ENCODE measurements at regions of chr1 and their contacts with region 1.

Region 1: GRCh38 chr1:160951443-160952128 is 3.0 kb downstream of the ITLN2 start:
- DNase-seq: peak; percentile 87
- ATAC-seq: peak; percentile 88
- H3K4me3 Mint-ChIP-seq: no peak overlapping the region
- H3K27ac Mint-ChIP-seq: no peak overlapping the region
- H3K4me1 Mint-ChIP-seq: peaks cover 22% of the 10 kb centered on the region
- H3K27me3 Mint-ChIP-seq: no peaks in the 10 kb centered on the region

Region 2: DNA sequence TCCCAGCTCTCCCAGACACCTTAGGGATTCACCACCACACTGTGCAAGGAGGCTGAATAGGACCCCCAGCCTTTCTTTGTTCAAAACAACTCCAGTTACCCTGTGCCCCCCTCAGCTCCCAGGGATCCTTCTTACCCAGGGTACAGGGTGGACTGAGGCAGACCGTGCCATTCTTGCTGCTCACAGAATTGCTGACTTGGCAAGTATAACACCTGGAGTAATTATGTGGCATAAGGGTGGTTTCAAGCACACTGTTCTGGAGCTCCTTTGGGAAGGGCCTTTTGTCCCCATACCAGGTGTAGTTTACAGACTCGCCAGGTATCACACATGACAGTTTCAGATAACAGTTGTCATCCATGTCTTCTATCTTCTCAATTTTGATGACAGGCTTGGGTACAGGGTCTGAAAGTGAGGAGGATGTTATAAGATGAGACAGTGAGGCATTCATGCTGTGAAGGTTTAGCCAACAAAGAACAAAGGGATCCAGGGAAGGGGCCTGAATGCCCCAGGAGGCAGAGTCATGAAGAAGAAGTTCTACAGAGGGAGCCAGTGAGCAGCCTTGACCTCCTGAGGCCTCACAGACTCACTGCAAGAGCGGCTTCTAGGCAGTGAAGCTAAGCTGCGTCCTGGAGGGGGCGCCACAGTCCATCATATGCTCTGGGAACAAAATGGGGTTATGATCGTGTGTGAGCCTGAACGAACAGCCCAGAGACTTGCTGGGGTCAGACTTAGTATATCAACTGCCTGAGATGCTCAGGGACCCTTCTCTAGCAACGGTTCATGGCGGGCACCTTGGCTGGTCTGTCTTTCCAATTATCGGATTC is 270.3 kb before region 1 on chr1:
- CTCF ChIA-PET with region 1: interaction called, 64 read pairs
- POLR2A ChIA-PET with region 1: no interaction called
- DNase-seq: peak; percentile 93
- ATAC-seq: peak; percentile 78
- H3K4me3 Mint-ChIP-seq: no peak overlapping the region
- H3K27ac Mint-ChIP-seq: peak overlapping the region; percentile 88
- H3K4me1 Mint-ChIP-seq: peaks cover 85% of the 10 kb centered on the region
- H3K27me3 Mint-ChIP-seq: no peaks in the 10 kb centered on the region

Region 3: GRCh38 chr1:160777486-160778089 is 174.0 kb before region 1 on chr1:
- CTCF ChIA-PET with region 1: interaction called, 226 read pairs
- POLR2A ChIA-PET with region 1: no interaction called
- DNase-seq: peak; percentile 66
- ATAC-seq: peak; percentile 76
- H3K4me3 Mint-ChIP-seq: no peak overlapping the region
- H3K27ac Mint-ChIP-seq: peak overlapping the region; percentile 26
- H3K4me1 Mint-ChIP-seq: peaks cover 40% of the 10 kb centered on the region
- H3K27me3 Mint-ChIP-seq: no peaks in the 10 kb centered on the region

Region 4: DNA sequence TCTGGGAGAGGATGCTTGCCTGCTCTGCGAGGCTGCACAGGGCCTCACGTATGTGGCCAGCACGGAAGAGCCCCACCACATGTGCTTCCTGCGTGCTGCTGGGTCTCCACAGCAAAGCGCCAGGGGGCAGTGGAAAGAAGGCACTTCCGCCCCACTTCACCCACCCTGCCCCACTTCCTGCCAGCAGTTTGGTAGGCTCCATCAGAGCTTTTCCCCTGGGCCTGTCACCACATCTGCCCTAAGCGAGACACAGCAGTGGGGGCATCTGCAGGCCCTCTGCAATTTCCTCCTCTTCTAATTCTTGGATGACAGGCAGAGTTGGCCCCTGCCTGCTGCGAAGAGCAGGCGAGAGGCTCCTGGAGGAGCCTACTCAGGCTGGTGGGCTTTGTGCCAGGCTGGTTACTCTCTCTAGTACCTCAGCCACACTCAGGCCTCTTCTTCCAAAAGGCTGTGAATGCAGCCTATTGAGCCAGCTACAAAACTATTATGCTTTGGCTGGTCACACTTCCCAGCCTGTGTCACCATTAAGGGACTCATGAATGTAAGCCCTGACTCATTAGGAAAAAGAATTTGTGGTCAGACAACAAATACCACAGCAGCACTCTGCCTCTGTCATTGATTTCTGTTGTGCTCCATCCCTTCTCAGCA is 113.9 kb before region 1 on chr1:
- CTCF ChIA-PET with region 1: interaction called, 323 read pairs
- POLR2A ChIA-PET with region 1: interaction called, 8 read pairs
- DNase-seq: peak; percentile 96
- ATAC-seq: peak; percentile 93
- H3K4me3 Mint-ChIP-seq: peak overlapping the region; percentile 73
- H3K27ac Mint-ChIP-seq: peak overlapping the region; percentile 97
- H3K4me1 Mint-ChIP-seq: peaks cover 77% of the 10 kb centered on the region
- H3K27me3 Mint-ChIP-seq: no peaks in the 10 kb centered on the region

Region 5: GRCh38 chr1:160963521-160963920 is 11.9 kb after region 1 on chr1:
- CTCF ChIA-PET with region 1: interaction called, 14 read pairs
- POLR2A ChIA-PET with region 1: no interaction called
- DNase-seq: no peak
- ATAC-seq: no peak
- H3K4me3 Mint-ChIP-seq: no peak overlapping the region
- H3K27ac Mint-ChIP-seq: no peak overlapping the region
- H3K4me1 Mint-ChIP-seq: no peaks in the 10 kb centered on the region
- H3K27me3 Mint-ChIP-seq: peaks cover 8% of the 10 kb centered on the region

Region 6: GRCh38 chr1:161098210-161099068 is 146.9 kb after region 1 on chr1 and contains the start of gene KLHDC9:
- CTCF ChIA-PET with region 1: interaction called, 13 read pairs
- POLR2A ChIA-PET with region 1: no interaction called
- DNase-seq: peak; percentile 86
- ATAC-seq: peak; percentile 78
- H3K4me3 Mint-ChIP-seq: peak within 1 kb of the TSS; percentile 80
- H3K27ac Mint-ChIP-seq: peak within 1 kb of the TSS; percentile 91
- H3K4me1 Mint-ChIP-seq: peaks cover 30% of the 10 kb centered on the region
- H3K27me3 Mint-ChIP-seq: peaks cover 2% of the 10 kb centered on the region
- total RNA-seq, gene KLHDC9: 0.61 to 0.91 TPM

Region 7: GRCh38 chr1:161117759-161118581 is 166.4 kb after region 1 on chr1 and contains the starts of genes NIT1 and PFDN2:
- CTCF ChIA-PET with region 1: no interaction called
- POLR2A ChIA-PET with region 1: no interaction called
- DNase-seq: peak; percentile 90
- ATAC-seq: peak; percentile 88
- H3K4me3 Mint-ChIP-seq: peak within 1 kb of the TSS; percentile 92
- H3K27ac Mint-ChIP-seq: peak within 1 kb of the TSS; percentile 95
- H3K4me1 Mint-ChIP-seq: peaks cover 56% of the 10 kb centered on the region
- H3K27me3 Mint-ChIP-seq: no peaks in the 10 kb centered on the region
- total RNA-seq, gene NIT1: 34.1 to 35.2 TPM
- total RNA-seq, gene PFDN2: 66.3 to 68.0 TPM